PC-3 (cell line): ENCODE measurements at regions of chr4 and their contacts with region 1.

Region 1: DNA sequence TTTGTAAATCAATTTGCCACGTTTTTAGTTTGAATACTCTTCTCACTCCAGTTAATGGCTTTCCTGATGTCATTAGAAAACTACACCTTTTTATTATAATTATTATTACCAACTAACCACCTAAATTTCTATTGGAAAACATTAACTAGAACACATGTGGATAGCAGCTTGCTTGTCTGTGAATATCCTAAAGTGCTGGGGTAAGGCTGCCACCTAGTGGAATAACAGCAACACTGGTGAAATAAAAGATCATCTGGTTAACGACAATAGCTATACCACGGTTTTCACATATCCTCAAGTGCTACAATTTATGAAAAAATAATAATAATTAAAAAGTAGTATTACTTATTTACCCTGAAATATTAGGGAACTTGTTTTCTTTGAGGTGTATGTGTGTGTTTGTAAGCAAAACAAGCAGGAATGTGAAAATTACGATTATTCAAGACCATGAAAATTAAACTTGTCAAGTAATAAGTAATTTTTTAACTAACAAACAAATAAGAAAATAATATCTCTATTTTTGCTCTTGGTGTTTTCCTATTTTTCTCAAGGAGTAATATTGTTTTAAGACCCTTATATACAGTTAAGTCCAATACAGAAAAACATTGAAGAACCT is 130.1 kb upstream of the TECRL start:
- DNase-seq: peak; percentile 75
- ATAC-seq: peak; percentile 86
- H3K4me3 ChIP-seq: no peak overlapping the region
- H3K27ac ChIP-seq: no peak overlapping the region
- H3K4me1 ChIP-seq: no peaks in the 10 kb centered on the region
- H3K27me3 ChIP-seq: no peaks in the 10 kb centered on the region
- CTCF ChIP-seq: peak; percentile 86

Region 2: GRCh38 chr4:63296773-63297172 is 1242.6 kb before region 1 on chr4:
- CTCF ChIA-PET with region 1: no interaction called
- POLR2A ChIA-PET with region 1: no interaction called
- intact Hi-C with region 1: loop called (anchors 1 kb)
- DNase-seq: peak; percentile 49
- ATAC-seq: peak; percentile 50
- H3K4me3 ChIP-seq: no peak overlapping the region
- H3K27ac ChIP-seq: no peak overlapping the region
- H3K4me1 ChIP-seq: no peaks in the 10 kb centered on the region
- H3K27me3 ChIP-seq: no peaks in the 10 kb centered on the region
- CTCF ChIP-seq: peak; percentile 62

Region 3: GRCh38 chr4:63528256-63528991 is 1010.9 kb before region 1 on chr4:
- CTCF ChIA-PET with region 1: interaction called, 3 read pairs
- POLR2A ChIA-PET with region 1: no interaction called
- intact Hi-C with region 1: loop called (anchors 1 kb)
- DNase-seq: peak; percentile 48
- ATAC-seq: no peak
- H3K4me3 ChIP-seq: no peak overlapping the region
- H3K27ac ChIP-seq: no peak overlapping the region
- H3K4me1 ChIP-seq: no peaks in the 10 kb centered on the region
- H3K27me3 ChIP-seq: no peaks in the 10 kb centered on the region
- CTCF ChIP-seq: peak; percentile 64

Region 4: DNA sequence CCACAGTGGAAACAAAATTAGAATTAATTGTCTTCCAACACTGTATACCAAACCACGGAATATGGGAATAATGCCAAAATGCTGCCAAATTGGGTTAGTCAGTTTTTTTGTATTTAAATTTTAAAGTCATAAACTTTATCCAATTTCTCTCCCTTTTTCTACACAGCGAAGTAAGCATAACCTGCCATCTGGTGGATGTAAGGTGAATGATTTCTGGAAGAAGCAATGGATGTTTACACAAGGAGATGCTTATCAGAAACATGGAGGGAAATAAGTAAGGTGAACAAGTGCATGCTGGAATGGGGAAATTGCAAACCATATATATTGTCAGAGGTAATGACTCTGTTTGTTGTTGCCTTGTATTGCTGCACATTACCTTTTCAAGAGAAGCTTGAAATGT is 822.0 kb before region 1 on chr4:
- CTCF ChIA-PET with region 1: no interaction called
- POLR2A ChIA-PET with region 1: no interaction called
- intact Hi-C with region 1: loop called (anchors 10 kb)
- DNase-seq: peak; percentile 82
- ATAC-seq: peak; percentile 70
- H3K4me3 ChIP-seq: no peak overlapping the region
- H3K27ac ChIP-seq: no peak overlapping the region
- H3K4me1 ChIP-seq: no peaks in the 10 kb centered on the region
- H3K27me3 ChIP-seq: no peaks in the 10 kb centered on the region
- CTCF ChIP-seq: peak; percentile 85

Region 5: DNA sequence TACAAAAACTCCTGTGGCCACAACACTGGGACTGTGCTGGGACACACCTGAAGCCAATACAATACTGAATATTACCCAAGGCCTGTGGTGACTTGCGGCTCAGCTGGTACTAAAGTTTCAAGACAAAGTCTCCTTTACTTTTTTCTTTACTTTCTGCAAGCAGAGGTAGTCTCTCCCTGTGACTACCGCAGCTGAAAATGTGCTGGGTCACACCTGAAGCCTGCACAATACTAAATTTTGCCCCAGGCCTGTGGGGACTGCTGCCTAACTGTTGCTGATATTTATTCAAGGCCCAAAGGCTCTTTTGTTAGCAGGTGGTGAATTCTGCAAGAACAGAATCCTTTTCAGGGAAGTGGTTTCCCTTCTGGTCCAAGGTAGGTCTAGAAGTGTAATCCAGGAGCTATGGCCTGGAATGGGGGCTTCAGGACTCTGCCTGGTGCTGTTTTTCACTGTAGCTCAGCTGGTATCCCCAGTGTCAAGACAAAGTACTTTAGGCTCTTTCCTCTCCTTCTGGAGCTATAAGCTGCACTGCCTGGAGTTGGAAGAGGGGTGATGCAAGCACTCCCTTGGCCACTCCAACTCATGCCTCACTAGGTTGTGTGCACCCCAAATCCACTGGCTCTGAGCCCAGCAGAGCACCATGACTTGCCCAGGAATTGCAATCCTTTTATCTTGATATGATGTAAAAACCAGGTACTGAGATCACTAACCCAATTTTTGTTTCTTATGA is 619.5 kb before region 1 on chr4:
- CTCF ChIA-PET with region 1: no interaction called
- POLR2A ChIA-PET with region 1: no interaction called
- intact Hi-C with region 1: loop called (anchors 5 kb)
- DNase-seq: peak; percentile 9
- ATAC-seq: no peak; the same call in 1 of the 2 replicates
- H3K4me3 ChIP-seq: no peak overlapping the region
- H3K27ac ChIP-seq: no peak overlapping the region
- H3K4me1 ChIP-seq: no peaks in the 10 kb centered on the region
- H3K27me3 ChIP-seq: no peaks in the 10 kb centered on the region
- CTCF ChIP-seq: no peak

Region 6: DNA sequence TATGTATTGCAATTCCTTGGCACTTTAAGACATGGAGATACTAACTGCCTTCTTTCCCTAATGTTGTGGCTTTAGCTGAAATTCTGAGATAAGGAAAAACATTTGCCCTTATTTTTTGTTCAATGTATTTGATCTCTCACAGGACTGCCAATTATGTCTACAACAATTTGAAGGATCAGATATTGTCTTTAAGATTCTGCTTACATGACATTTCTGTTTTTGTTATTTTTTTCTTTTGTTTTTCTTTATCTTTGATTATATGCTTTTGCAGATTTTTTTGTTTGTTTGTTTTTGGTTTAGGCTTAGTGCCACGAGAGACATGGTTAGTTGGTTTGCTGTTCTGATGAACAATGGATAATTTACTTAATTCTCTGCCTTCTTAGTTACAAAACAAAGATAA is 433.4 kb before region 1 on chr4:
- CTCF ChIA-PET with region 1: no interaction called
- POLR2A ChIA-PET with region 1: no interaction called
- intact Hi-C with region 1: loop called (anchors 5 kb)
- DNase-seq: no peak
- ATAC-seq: no peak
- H3K4me3 ChIP-seq: no peak overlapping the region
- H3K27ac ChIP-seq: no peak overlapping the region
- H3K4me1 ChIP-seq: no peaks in the 10 kb centered on the region
- H3K27me3 ChIP-seq: no peaks in the 10 kb centered on the region
- CTCF ChIP-seq: no peak

Region 7: DNA sequence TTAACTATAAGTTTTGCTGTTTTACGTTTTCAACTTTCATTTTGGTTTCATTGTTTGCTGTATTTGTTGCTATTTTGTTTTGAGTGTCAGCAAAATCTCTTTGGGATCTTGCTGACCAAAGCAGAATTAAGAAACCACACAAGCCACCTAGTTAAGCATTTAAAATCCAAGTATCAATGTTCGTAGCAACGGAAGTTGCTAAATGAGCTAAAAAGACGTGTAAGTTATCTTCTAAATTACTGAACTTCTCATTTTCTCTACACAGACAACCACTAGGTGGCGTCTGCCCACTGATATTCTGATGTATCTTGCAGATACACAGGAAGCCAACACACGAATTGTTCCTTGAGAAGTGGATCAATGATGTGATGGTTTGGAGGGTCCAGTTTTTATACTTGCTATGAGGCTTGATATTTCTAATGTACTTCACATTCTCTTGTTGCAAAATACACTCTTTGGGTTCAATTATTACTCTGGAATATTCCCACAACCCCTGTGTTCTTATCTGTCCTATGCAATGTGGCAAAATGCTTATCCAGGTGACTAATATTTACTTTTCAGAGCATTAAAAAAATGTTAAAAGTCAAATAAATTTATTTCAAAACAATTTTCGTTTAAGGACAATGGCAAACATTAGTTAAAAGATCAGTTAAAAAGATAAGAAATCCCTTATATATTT is 380.6 kb before region 1 on chr4:
- CTCF ChIA-PET with region 1: interaction called, 24 read pairs
- POLR2A ChIA-PET with region 1: no interaction called
- intact Hi-C with region 1: loop called (anchors 1 kb)
- DNase-seq: peak; percentile 90
- ATAC-seq: peak; percentile 82
- H3K4me3 ChIP-seq: peak overlapping the region; percentile 61
- H3K27ac ChIP-seq: no peak overlapping the region
- H3K4me1 ChIP-seq: 0 out of 2 replicates have a peak, but pooled peaks cover 4% of the 10 kb centered on the region
- H3K27me3 ChIP-seq: no peaks in the 10 kb centered on the region
- CTCF ChIP-seq: peak; percentile 98

Region 8: DNA sequence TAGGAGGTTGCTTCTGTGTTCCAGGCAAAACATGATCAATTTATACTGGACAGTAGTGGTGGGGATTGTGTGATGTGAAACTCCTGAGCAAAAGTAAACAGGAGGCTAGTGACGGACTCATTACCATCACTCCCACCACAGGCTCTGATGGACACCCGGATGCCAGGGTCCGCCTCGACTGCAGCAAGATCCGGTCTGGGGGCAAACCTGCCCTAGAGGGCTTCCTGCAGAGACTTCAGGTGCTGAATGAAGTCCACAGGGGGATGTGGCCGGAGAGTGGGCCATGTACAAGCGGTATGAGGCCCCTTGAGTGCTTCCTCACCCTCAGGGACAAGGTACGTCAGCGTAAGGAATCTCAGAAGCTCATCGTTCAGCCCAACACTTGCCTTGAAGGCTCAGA is 106.7 kb before region 1 on chr4:
- CTCF ChIA-PET with region 1: no interaction called
- POLR2A ChIA-PET with region 1: no interaction called
- intact Hi-C with region 1: no loop called
- DNase-seq: no peak
- ATAC-seq: no peak
- H3K4me3 ChIP-seq: no peak overlapping the region
- H3K27ac ChIP-seq: no peak overlapping the region
- H3K4me1 ChIP-seq: no peaks in the 10 kb centered on the region
- H3K27me3 ChIP-seq: no peaks in the 10 kb centered on the region
- CTCF ChIP-seq: no peak